CD4-positive, alpha-beta memory T cell (primary cell): ENCODE measurements at regions of chr21 and their contacts with region 1.

Region 1: DNA sequence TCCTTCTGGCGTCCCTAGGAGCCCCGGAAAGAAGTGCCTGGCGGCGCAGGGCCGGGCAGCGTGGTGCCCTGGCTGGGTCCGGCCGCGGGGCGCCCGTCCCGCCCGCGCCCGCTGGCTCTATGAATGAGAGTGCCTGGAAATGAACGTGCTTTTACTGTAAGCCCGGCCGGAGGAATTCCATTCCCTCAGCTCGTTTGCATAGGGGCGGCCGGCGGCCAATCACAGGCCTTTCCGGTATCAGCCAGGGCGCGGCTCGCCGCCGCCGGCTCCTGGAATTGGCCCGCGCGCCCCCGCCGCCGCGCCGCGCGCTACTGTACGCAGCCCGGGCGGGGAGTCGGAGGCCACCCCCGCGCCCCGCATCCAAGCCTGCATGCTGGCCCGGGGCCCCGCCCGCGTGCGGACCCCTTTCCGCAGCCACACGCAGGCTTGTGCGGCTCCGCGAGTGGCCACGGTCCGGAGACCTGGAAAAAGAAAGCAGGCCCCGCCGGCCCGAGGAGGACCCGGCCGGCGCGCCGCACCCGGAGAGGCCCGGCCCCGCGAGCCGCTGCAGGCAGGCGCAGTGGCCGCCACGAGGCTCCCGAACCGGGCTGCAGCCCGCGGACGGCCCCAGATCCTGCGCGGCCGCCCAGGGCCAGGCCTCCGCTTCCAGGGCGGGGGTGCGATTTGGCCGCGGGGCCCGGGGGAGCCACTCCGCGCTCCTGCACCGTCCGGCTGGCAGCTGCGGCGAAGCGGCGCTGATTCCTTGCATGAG is 160.4 kb downstream of the RUNX1 start:
- DNase-seq: peak; percentile 65 to 83 (median 68)
- H3K4me3 ChIP-seq: peak overlapping the region; percentile 52 to 78
- H3K4me3 Mint-ChIP-seq: peak overlapping the region; percentile 90 to 99 (median 95)
- H3K27ac ChIP-seq: peak overlapping the region; percentile 75
- H3K27ac Mint-ChIP-seq: peak overlapping the region; percentile 93 to 100 (median 99)
- H3K4me1 ChIP-seq: peaks cover 69% of the 10 kb centered on the region
- H3K4me1 Mint-ChIP-seq: peaks cover 25 to 68% (median 44%) of the 10 kb centered on the region in 4 donors
- H3K27me3 ChIP-seq: no peaks in the 10 kb centered on the region
- H3K27me3 Mint-ChIP-seq: peaks cover 0 to 1% of the 10 kb centered on the region in 2 donors

Region 2: DNA sequence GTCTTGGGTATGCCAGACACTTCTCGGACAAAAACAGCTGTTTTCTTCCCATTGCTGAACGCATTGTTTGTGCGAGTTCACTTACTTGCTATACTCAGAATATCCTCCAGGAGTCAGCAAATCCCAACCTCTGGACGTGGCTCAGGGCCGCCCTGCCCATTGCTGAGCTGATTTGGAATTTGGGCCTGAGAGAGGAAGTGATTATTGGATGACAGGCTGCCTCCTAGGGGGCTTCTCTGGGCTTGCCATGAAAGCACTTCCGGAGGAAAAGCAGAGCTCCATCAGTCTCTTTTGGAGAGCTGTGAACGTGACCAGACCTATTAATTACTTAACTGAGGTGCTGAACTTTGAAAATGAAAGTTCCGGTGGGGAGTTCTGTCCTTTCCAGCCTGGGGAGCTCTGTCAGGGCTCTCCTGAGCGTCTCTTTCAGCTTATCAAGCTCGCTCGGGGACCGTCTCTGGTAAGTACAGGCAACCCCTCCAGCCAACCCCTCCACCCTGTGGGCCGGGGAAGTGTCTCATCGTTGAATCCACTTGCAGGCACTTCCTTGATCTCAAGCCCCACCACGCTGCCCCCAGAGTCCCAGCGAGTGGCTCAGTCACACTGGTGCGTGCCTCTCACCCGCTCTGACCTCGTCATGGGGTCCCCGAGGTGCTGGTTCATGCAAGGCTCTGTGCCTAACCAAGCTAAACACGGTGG is 143.0 kb before region 1 on chr21:
- CTCF ChIA-PET with region 1: interaction called, 20 read pairs
- POLR2A ChIA-PET with region 1: no interaction called
- intact Hi-C with region 1: loop called (anchors 1 kb)
- DNase-seq: peak; percentile 43 to 63 (median 53)
- H3K4me3 ChIP-seq: no peak overlapping the region
- H3K4me3 Mint-ChIP-seq: peak overlapping the region in 3 of 8 donors; percentile 17 to 55 (median 50)
- H3K27ac ChIP-seq: no peak overlapping the region
- H3K27ac Mint-ChIP-seq: no peak overlapping the region
- H3K4me1 ChIP-seq: peaks cover 8% of the 10 kb centered on the region
- H3K4me1 Mint-ChIP-seq: peaks cover 0 to 4% (median 2%) of the 10 kb centered on the region in 4 donors
- H3K27me3 ChIP-seq: no peaks in the 10 kb centered on the region
- H3K27me3 Mint-ChIP-seq: peaks cover 7 to 8% of the 10 kb centered on the region in 2 donors

Region 3: GRCh38 chr21:34933609-34934335 is 45.0 kb after region 1 on chr21:
- CTCF ChIA-PET with region 1: interaction called, 15 read pairs
- POLR2A ChIA-PET with region 1: interaction called, 18 read pairs
- intact Hi-C with region 1: loop called (anchors 2 kb)
- DNase-seq: peak; percentile 62 to 75 (median 73)
- H3K4me3 ChIP-seq: peak overlapping the region; percentile 20 to 44
- H3K4me3 Mint-ChIP-seq: peak overlapping the region; percentile 66 to 92 (median 86)
- H3K27ac ChIP-seq: peak overlapping the region; percentile 73
- H3K27ac Mint-ChIP-seq: peak overlapping the region; percentile 94 to 99 (median 96)
- H3K4me1 ChIP-seq: peaks cover 90% of the 10 kb centered on the region
- H3K4me1 Mint-ChIP-seq: peaks cover 75 to 91% (median 82%) of the 10 kb centered on the region in 4 donors
- H3K27me3 ChIP-seq: no peaks in the 10 kb centered on the region
- H3K27me3 Mint-ChIP-seq: no peaks in the 10 kb centered on the region

Region 4: GRCh38 chr21:34986561-34987500 is 98.1 kb after region 1 on chr21:
- CTCF ChIA-PET with region 1: interaction called, 4 read pairs
- POLR2A ChIA-PET with region 1: interaction called, 27 read pairs
- intact Hi-C with region 1: loop called (anchors 2 kb)
- DNase-seq: peak; percentile 54 to 87 (median 66)
- H3K4me3 ChIP-seq: peak overlapping the region in 1 of 2 donors; percentile 1
- H3K4me3 Mint-ChIP-seq: peak overlapping the region; percentile 74 to 93 (median 80)
- H3K27ac ChIP-seq: peak overlapping the region; percentile 54
- H3K27ac Mint-ChIP-seq: peak overlapping the region; percentile 93 to 97 (median 95)
- H3K4me1 ChIP-seq: peaks cover 100% of the 10 kb centered on the region
- H3K4me1 Mint-ChIP-seq: peaks cover 36 to 95% (median 87%) of the 10 kb centered on the region in 4 donors
- H3K27me3 ChIP-seq: no peaks in the 10 kb centered on the region
- H3K27me3 Mint-ChIP-seq: no peaks in the 10 kb centered on the region

Region 5: GRCh38 chr21:35026617-35027562 is 138.1 kb after region 1 on chr21:
- CTCF ChIA-PET with region 1: interaction called, 7 read pairs
- POLR2A ChIA-PET with region 1: interaction called, 90 read pairs
- intact Hi-C with region 1: loop called (anchors 1 kb)
- DNase-seq: peak; percentile 88 to 91 (median 89)
- H3K4me3 ChIP-seq: peak overlapping the region; percentile 48 to 53
- H3K4me3 Mint-ChIP-seq: peak overlapping the region; percentile 83 to 97 (median 89)
- H3K27ac ChIP-seq: peak overlapping the region; percentile 71
- H3K27ac Mint-ChIP-seq: peak overlapping the region; percentile 97 to 100 (median 98)
- H3K4me1 ChIP-seq: peaks cover 92% of the 10 kb centered on the region
- H3K4me1 Mint-ChIP-seq: peaks cover 72 to 96% (median 87%) of the 10 kb centered on the region in 4 donors
- H3K27me3 ChIP-seq: no peaks in the 10 kb centered on the region
- H3K27me3 Mint-ChIP-seq: no peaks in the 10 kb centered on the region

Region 6: GRCh38 chr21:35204850-35205541 is 316.3 kb after region 1 on chr21:
- CTCF ChIA-PET with region 1: interaction called, 11 read pairs
- POLR2A ChIA-PET with region 1: interaction called, 3 read pairs
- intact Hi-C with region 1: loop called (anchors 2 kb)
- DNase-seq: peak in 1 of 5 donors; percentile 5
- H3K4me3 ChIP-seq: peak overlapping the region in 1 of 2 donors; percentile 38
- H3K4me3 Mint-ChIP-seq: peak overlapping the region; percentile 76 to 94 (median 82)
- H3K27ac ChIP-seq: no peak overlapping the region
- H3K27ac Mint-ChIP-seq: peak overlapping the region in 1 of 7 donors; percentile 18
- H3K4me1 ChIP-seq: peaks cover 16% of the 10 kb centered on the region
- H3K4me1 Mint-ChIP-seq: peaks cover 8 to 20% (median 15%) of the 10 kb centered on the region in 4 donors
- H3K27me3 ChIP-seq: no peaks in the 10 kb centered on the region
- H3K27me3 Mint-ChIP-seq: peaks cover 0 to 2% of the 10 kb centered on the region in 2 donors

Region 7: DNA sequence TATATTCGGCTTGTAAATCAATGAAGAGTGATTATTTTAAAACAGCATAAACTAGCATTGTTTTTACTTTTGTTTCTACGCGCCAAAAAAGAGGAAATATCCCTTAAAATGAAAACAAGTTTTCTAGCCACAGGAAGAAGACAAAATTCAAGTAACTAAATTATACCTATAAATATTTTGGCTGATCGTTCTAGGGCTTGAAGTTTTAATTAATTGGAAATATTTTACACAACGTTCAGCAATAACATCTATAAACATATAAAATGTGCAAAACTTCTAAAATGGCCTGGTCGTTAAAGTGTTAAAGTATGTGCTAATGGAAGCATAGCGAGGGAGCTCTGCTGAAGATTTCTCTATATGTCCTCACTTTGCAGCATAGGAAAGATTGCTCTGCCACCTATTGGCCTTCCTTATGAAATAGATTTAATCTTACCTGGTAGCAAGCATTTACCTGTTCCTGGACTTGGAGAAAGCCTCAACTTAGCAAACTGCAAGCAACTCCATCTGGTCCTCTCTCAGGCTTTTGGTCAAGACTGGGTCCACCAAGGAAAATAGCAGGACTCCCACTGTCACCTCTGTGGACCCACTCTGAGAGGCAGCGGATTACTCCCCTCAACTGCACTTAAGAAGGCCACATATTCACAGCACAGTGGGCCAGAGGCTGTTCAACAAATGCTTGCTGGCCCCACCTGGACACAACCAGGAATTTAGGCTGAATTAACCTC is 511.7 kb after region 1 on chr21:
- CTCF ChIA-PET with region 1: interaction called, 50 read pairs
- POLR2A ChIA-PET with region 1: interaction called, 16 read pairs
- intact Hi-C with region 1: loop called (anchors 1 kb)
- DNase-seq: peak; percentile 39 to 66 (median 63)
- H3K4me3 ChIP-seq: no peak overlapping the region
- H3K4me3 Mint-ChIP-seq: no peak overlapping the region
- H3K27ac ChIP-seq: no peak overlapping the region
- H3K27ac Mint-ChIP-seq: no peak overlapping the region
- H3K4me1 ChIP-seq: no peaks in the 10 kb centered on the region
- H3K4me1 Mint-ChIP-seq: peaks cover 0 to 2% (median under 1%) of the 10 kb centered on the region in 4 donors
- H3K27me3 ChIP-seq: no peaks in the 10 kb centered on the region
- H3K27me3 Mint-ChIP-seq: peaks cover 1 to 3% of the 10 kb centered on the region in 2 donors